ENCODE measurements at regions of chr9 and their contacts with region 1.

Region 1: DNA sequence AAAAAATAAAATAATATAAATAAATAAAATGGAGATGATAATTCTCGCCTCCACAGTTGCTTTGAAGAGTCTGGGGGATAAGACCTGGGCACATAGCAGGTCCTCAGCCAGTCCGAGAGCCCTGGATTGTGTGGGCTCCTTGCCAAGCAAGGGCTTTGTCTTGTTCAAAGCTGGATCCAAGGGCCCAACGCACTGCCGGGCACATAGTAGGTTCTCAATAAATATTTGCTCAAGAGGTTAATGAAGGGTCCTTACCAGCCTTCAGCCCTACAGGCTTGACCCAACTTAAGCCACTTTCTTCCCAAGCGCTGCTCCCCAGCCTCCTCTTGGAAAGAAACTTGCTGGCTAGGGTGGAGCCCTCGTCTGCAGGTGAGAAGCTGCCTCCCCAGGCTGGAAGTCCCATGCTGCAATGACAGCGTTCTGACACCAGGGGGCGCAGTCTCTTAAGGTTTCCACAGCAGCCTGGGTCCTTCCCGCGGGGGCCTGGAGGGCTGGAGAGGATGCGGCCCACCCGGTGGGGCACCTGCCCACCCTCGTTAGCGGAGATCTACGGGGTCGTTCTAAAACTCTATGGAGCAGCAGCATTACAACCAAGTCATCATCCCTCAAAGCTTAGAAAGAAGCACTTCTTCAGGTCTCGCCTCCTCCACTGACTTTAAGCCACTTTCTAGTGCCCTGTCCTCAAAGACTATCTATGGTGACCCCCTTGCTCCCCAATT is 115.2 kb downstream of the LHX2 start:
- H3K4me3 Mint-ChIP-seq: no peak overlapping the region
- H3K27ac Mint-ChIP-seq: no peak overlapping the region
- H3K4me1 Mint-ChIP-seq: peaks cover 24% of the 10 kb centered on the region
- H3K27me3 Mint-ChIP-seq: peaks cover 4% of the 10 kb centered on the region

Region 2: DNA sequence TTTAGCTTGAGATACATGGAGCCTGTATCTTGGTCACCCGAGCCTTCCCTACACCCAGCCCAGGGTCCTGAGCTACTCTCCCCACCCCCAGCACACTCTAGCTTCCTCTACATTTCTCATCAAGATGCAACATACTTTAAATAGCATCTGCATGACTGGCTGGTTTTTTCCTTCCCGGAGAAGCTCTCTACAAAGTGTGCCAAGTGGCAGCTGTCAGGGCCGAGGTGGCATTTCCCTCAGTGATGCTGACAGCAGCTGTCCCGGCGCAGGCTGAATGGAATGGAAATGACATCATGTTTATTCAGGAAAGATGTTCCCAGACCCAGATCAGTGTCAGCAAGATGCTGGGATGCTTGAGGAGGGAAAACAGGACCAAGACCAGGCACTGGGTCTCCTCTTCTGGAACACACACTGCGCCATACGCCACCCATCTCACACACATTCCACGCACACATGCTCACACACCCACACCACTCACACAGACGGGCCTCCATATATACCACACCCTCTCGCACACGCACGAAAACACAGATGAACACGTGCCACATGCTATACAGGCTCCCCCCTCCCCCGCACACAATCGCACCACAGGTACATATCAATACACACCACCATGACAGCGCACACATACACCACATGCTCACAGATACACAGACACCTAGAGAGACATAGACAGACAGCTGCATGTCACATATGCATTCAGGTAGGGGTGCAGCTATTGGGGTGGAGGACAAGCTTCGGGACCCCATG is 47.4 kb before region 1 on chr9:
- intact Hi-C with region 1: no loop called
- H3K4me3 Mint-ChIP-seq: no peak overlapping the region
- H3K27ac Mint-ChIP-seq: no peak overlapping the region
- H3K4me1 Mint-ChIP-seq: no peaks in the 10 kb centered on the region
- H3K27me3 Mint-ChIP-seq: peaks cover 10% of the 10 kb centered on the region

Region 3: DNA sequence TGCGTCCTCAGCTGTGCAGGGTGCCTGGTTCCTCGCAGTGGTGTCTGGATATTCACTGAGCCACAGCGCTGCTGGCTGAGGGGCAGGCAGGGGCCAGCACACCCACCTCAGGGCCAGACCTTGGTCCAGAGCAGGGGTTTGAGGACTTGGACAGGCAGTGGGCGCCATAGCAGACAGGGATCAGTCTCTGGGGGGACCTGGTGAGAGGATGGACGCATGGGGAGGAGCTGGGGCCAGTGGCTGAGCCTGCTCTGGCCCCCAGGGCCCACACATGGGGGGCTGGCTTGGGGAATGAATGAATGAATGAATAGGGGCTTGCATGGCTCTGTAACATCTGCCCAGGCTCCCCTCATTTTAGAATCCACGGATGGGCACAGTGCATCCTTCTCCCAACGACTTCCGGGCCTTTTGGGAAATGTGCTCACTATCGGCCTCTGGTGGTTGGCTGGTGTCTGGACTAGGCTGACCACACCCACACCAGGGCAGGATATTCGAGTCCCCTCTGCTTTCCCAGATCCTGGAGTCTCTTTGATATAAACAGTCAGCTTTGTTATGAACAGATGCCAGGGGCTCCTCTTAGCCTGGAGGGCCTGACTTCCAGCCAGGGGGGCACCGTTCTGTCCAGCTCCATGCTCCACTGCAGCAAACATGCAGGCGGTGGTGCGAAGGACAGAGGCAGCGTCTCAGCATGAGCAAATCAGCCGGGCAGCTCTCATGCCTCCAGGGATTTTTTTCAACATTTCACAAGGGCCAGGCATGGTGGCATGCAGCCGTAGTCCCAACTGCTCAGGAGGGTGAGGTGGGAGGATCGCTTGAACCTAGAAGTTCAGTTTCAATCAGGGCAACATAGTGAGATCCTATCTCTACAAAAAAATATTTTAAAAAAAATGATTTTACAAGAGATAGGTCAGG is 193.6 kb after region 1 on chr9:
- intact Hi-C with region 1: loop called (anchors 1 kb)
- H3K4me3 Mint-ChIP-seq: no peak overlapping the region
- H3K27ac Mint-ChIP-seq: no peak overlapping the region
- H3K4me1 Mint-ChIP-seq: peaks cover 61% of the 10 kb centered on the region
- H3K27me3 Mint-ChIP-seq: no peaks in the 10 kb centered on the region

Measured in dendritic cell treated with granulocyte-macrophage colony-stimulating factor and Interleukin-4, amounts not matched to agents 40 ng/mL and 50 ng/mL, for 4 days (primary cell).